ENCODE measurements at regions of chr1 and their contacts with region 1.

Region 1: DNA sequence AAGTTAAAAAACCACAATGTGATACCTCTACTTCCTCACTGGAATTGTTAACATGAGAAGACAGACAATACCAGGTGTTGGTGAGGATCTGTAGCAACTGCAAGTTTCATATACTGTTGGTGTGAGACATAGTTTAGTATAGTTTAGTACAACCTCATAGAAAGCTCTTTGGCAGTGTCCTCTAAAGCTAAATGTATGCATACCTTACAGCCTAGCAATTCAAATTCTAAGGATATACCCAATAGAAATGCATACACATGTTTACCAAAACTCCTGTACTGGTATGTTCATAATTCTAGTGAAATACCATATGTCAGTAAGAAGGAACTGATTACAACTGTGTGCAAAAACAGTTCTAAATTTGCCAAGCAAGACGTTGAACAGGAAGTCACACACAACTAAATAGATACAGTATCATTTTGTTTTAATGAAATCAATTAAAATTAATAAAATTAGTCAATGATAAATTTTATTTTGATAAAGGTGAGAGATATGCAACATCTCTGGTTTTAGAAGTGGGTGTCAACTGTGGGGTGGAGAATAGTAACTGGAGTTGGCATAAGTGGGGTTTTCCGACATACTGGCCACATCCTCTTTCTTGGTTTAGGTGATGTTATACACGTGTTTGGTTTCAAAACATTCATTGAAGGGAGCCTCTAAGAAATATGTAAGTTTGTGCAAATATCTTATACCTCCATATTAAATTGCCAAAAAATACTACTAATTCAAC is 450.7 kb downstream of the PTPRC start:
- DNase-seq: peak; percentile 50 to 81 (median 52)
- H3K4me3 ChIP-seq: no peak overlapping the region
- H3K4me3 Mint-ChIP-seq: no peak overlapping the region
- H3K27ac ChIP-seq: no peak overlapping the region
- H3K27ac Mint-ChIP-seq: peak overlapping the region in 4 of 7 donors; percentile 5 to 78 (median 22)
- H3K4me1 ChIP-seq: peaks cover 0 to 11% of the 10 kb centered on the region in 2 donors
- H3K4me1 Mint-ChIP-seq: peaks cover 9% of the 10 kb centered on the region
- H3K27me3 ChIP-seq: no peaks in the 10 kb centered on the region
- H3K27me3 Mint-ChIP-seq: no peaks in the 10 kb centered on the region
- CTCF ChIP-seq: no peak

Region 2: GRCh38 chr1:198771563-198772153 is 317.9 kb before region 1 on chr1:
- intact Hi-C with region 1: loop called in 1 of 2 experiments (anchors 10 kb)
- DNase-seq: peak in 1 of 3 donors; percentile 17
- H3K4me3 ChIP-seq: no peak overlapping the region
- H3K4me3 Mint-ChIP-seq: no peak overlapping the region
- H3K27ac ChIP-seq: no peak overlapping the region
- H3K27ac Mint-ChIP-seq: no peak overlapping the region
- H3K4me1 ChIP-seq: peaks cover 20 to 29% of the 10 kb centered on the region in 2 donors
- H3K4me1 Mint-ChIP-seq: peaks cover 29% of the 10 kb centered on the region
- H3K27me3 ChIP-seq: no peaks in the 10 kb centered on the region
- H3K27me3 Mint-ChIP-seq: no peaks in the 10 kb centered on the region
- CTCF ChIP-seq: peak; percentile 55

Region 3: GRCh38 chr1:199102239-199102638 is 12.7 kb after region 1 on chr1:
- intact Hi-C with region 1: no loop called
- DNase-seq: peak in 2 of 3 donors; percentile 19 to 65
- H3K4me3 ChIP-seq: no peak overlapping the region
- H3K4me3 Mint-ChIP-seq: no peak overlapping the region
- H3K27ac ChIP-seq: no peak overlapping the region
- H3K27ac Mint-ChIP-seq: peak overlapping the region in 6 of 7 donors; percentile 40 to 82 (median 76)
- H3K4me1 ChIP-seq: peaks cover 16 to 20% of the 10 kb centered on the region in 2 donors
- H3K4me1 Mint-ChIP-seq: peaks cover 30% of the 10 kb centered on the region
- H3K27me3 ChIP-seq: no peaks in the 10 kb centered on the region
- H3K27me3 Mint-ChIP-seq: no peaks in the 10 kb centered on the region
- CTCF ChIP-seq: no peak

Region 4: GRCh38 chr1:199399996-199400724 is 310.6 kb after region 1 on chr1:
- intact Hi-C with region 1: no loop called
- DNase-seq: peak in 2 of 3 donors; percentile 11 to 15
- H3K4me3 ChIP-seq: peak overlapping the region in 1 of 3 experiments; percentile 21
- H3K4me3 Mint-ChIP-seq: peak overlapping the region in 1 of 2 donors; percentile 41
- H3K27ac ChIP-seq: peak overlapping the region in 1 of 2 donors; percentile 7
- H3K27ac Mint-ChIP-seq: peak overlapping the region in 5 of 7 donors; percentile 0 to 90 (median 76)
- H3K4me1 ChIP-seq: peaks cover 9 to 11% of the 10 kb centered on the region in 2 donors
- H3K4me1 Mint-ChIP-seq: peaks cover 17% of the 10 kb centered on the region
- H3K27me3 ChIP-seq: no peaks in the 10 kb centered on the region
- H3K27me3 Mint-ChIP-seq: peaks cover 0 to 2% (median 0%) of the 10 kb centered on the region in 3 donors
- CTCF ChIP-seq: peak; percentile 12

Measured in CD14-positive monocyte (primary cell).